ENCODE measurements at regions of chrX and their contacts with region 1.

Region 1: DNA sequence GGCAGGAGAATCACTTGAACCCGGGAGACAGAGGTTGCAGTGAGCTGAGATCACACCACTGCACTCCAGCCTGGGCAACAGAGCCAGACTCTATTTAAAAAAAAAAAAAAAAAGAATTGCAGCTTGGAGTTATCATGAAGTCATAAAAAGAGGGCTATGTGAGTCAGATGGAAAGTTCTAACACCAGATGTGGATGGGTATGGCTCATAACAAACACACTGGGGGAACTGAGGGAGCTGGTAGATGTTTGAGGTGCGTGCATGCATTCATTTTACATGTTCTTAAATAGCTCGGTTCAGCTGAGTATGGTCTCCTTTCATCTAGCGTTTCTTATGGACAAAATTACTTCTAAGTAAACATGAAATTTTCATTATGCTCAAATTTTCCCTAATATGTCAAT is 11.7 kb downstream of the TRMT2B start:
- DNase-seq: no peak
- H3K4me3 ChIP-seq: no peak overlapping the region
- H3K27ac ChIP-seq: no peak overlapping the region
- H3K4me1 ChIP-seq: no peaks in the 10 kb centered on the region
- H3K27me3 ChIP-seq: no peaks in the 10 kb centered on the region
- CTCF ChIP-seq: no peak

Region 2: DNA sequence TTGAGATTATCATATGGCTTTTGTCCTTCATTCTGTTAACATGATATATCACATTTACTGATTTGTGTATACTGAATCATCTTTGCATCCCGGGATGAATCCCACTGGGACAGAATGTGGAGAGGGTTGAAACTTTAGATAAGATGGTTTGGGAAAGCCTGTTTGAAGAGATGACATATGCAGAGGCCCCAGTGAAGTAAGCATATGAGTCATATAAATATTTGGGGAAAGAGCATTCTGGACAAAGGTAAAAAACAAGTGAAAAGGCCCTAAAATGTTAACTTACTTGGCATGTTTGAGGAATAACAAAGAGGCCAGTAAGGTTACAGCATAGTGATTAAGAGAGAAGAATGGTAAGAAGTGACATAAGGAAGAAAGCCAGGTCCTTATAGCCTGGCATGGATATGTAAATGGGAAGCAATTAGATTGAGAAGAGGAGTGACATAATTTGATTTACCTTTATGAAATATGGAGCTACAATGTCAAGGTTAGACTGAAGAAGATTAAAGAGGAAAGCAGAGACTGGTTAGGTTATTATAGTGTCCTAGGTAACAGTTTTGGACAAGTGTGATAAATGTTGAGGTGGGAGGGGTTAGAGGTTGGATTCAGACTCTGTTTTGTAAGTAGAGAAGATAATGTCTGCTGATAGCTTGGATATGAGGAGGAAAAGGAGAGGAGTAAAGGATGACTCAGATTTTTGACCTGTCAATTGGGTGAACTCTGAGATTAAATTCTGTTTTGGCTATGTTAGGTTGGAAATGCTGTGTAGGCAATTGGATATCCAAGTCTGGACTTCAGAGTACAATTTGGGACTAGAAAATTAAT is 124.8 kb after region 1 on chrX:
- CTCF ChIA-PET with region 1: no interaction called
- POLR2A ChIA-PET with region 1: interaction called, 27 read pairs
- intact Hi-C with region 1: no loop called
- DNase-seq: no peak
- H3K4me3 ChIP-seq: no peak overlapping the region
- H3K27ac ChIP-seq: no peak overlapping the region
- H3K4me1 ChIP-seq: peaks cover 15% of the 10 kb centered on the region; the same call in 1 of the 2 replicates
- H3K27me3 ChIP-seq: no peaks in the 10 kb centered on the region
- CTCF ChIP-seq: no peak

Region 3: DNA sequence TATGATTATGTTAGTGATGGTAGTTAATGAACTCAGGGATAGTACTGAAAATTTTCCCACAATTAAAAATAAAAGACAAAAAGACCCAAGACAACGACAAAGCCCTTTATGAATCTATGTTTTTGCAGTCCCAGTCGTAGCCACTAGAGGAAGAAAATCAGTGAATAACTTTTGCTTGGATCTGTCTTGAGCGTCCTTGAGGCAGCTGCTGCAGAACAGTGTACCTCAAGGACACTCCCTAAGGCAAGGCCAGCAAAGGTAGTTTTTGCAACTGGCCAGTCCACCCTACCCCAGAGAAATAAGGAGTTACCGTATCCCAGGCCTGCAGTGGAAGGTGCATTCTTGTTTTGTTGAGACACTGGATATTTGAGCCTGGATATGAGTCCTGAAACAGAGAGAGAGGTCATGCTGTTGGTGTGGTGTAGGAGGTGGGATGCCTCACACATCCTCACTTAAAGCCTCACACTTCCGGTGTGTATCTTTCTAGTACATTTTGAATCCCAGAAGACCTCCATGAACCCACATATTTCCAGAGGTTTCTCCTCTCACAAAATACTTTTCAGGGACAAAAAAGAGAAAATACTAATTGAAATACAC is 317.1 kb after region 1 on chrX:
- CTCF ChIA-PET with region 1: no interaction called
- POLR2A ChIA-PET with region 1: no interaction called
- intact Hi-C with region 1: no loop called
- DNase-seq: no peak
- H3K4me3 ChIP-seq: no peak overlapping the region
- H3K27ac ChIP-seq: no peak overlapping the region
- H3K4me1 ChIP-seq: no peaks in the 10 kb centered on the region
- H3K27me3 ChIP-seq: no peaks in the 10 kb centered on the region
- CTCF ChIP-seq: peak; percentile 39; the same call in 1 of the 2 replicates

Measured in PC-9 (cell line).